OCI-LY7 (cell line): ENCODE measurements at regions of chr1 and their contacts with region 1.

Region 1: GRCh38 chr1:173693238-173693637 is 21.5 kb upstream of the KLHL20 start:
- DNase-seq: no peak
- H3K4me3 ChIP-seq: no peak overlapping the region
- H3K27ac ChIP-seq: no peak overlapping the region
- H3K4me1 ChIP-seq: no peaks in the 10 kb centered on the region
- CTCF ChIP-seq: no peak

Region 2: DNA sequence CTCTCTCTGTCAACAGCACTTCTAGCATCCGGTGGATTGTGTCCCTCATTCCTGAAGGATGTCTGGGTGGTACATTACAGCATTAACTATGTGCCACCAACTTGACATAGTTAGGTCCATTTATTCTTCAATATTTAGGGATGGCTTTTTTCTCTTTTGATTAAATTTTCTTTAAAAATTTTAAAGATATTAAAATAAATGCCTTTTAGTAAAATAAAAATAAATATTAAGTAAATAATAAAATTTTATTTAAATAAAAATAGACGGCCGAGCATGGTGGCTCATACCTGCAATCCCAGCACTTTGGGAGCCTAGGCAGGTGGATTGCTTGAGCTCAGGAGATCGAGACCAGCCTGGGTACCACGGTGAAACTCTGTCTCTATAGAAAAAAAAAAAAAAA is 11.9 kb after region 1 on chr1:
- CTCF ChIA-PET with region 1: no interaction called
- POLR2A ChIA-PET with region 1: no interaction called
- intact Hi-C with region 1: no loop called
- DNase-seq: no peak
- H3K4me3 ChIP-seq: no peak overlapping the region
- H3K27ac ChIP-seq: no peak overlapping the region
- H3K4me1 ChIP-seq: no peaks in the 10 kb centered on the region
- CTCF ChIP-seq: no peak

Region 3: GRCh38 chr1:174068000-174068399 is 374.8 kb after region 1 on chr1:
- CTCF ChIA-PET with region 1: no interaction called
- POLR2A ChIA-PET with region 1: no interaction called
- intact Hi-C with region 1: loop called (anchors 10 kb)
- DNase-seq: peak; percentile 10
- H3K4me3 ChIP-seq: no peak overlapping the region
- H3K27ac ChIP-seq: no peak overlapping the region
- H3K4me1 ChIP-seq: no peaks in the 10 kb centered on the region
- CTCF ChIP-seq: no peak